PC-9 (cell line): ENCODE measurements at regions of chr1 and their contacts with region 1.

Region 1: GRCh38 chr1:172745014-172745413 is 86.1 kb downstream of the FASLG start:
- DNase-seq: peak; percentile 38 to 66
- H3K4me3 ChIP-seq: no peak overlapping the region
- H3K27ac ChIP-seq: no peak overlapping the region
- H3K4me1 ChIP-seq: peaks cover 22% of the 10 kb centered on the region
- H3K27me3 ChIP-seq: 0 out of 2 replicates have a peak, but pooled peaks cover 5% of the 10 kb centered on the region
- CTCF ChIP-seq: peak; percentile 86

Region 2: DNA sequence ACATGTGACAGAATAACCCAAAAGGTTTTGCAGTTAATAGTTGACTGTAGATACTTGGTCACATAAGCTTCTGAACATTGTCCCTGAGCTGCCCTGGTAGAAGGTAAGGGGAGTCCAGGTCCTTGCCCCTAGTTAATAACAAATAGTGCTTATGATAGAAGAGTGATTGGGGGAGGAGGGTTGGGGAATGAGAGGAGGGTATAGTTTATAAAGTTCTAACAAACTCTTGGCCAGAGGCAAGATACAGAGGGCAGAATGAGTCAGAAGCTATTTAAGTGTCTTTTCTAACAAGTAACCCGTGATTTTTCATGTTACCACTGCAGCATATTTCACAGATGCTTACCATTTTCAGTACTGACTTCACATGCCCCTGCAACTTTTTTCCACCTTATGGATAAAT is 1149.7 kb before region 1 on chr1:
- CTCF ChIA-PET with region 1: no interaction called
- POLR2A ChIA-PET with region 1: no interaction called
- intact Hi-C with region 1: no loop called
- DNase-seq: no peak
- H3K4me3 ChIP-seq: no peak overlapping the region
- H3K27ac ChIP-seq: no peak overlapping the region
- H3K4me1 ChIP-seq: no peaks in the 10 kb centered on the region
- H3K27me3 ChIP-seq: no peaks in the 10 kb centered on the region
- CTCF ChIP-seq: no peak

Region 3: DNA sequence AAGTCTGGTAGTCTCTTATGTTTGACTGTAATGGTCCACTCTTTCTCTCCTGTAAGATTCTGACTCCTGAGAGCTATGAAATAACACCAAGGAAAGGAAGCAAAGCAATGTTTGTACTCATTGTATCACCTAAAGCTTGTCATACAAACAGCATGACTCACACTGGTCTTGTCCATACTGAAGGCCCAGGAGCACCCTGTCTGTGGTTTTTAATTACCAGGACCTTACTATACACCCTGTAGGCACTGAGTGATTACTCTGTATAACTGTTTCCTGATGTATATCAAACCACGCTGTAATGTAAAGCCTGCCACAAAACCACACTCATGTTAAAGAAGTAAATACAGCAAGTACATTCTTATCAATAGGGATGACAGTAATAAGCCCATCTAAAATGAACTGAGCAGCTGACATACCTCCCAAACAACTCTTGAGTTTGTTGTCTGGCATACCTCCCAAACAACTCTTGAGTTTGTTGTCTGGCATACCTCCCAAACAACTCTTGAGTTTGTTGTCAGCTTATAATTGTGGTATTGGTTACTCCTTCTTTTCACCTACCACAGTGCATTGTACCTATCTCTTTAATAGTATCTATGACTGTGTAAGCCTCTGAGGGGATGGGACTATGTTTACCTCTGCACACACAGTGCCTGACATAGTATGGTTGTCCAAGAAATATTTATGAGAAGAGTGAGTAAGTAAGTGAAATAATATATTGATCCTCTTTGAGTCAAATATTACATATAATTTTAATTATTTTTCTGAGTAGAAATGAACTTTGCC is 317.3 kb after region 1 on chr1:
- CTCF ChIA-PET with region 1: no interaction called
- POLR2A ChIA-PET with region 1: interaction called, 4 read pairs
- intact Hi-C with region 1: loop called (anchors 5 kb)
- DNase-seq: peak; percentile 51 to 96
- H3K4me3 ChIP-seq: no peak overlapping the region
- H3K27ac ChIP-seq: peak overlapping the region; percentile 32; the same call in 1 of the 2 replicates
- H3K4me1 ChIP-seq: peaks cover 36% of the 10 kb centered on the region
- H3K27me3 ChIP-seq: no peaks in the 10 kb centered on the region
- CTCF ChIP-seq: no peak

Region 4: DNA sequence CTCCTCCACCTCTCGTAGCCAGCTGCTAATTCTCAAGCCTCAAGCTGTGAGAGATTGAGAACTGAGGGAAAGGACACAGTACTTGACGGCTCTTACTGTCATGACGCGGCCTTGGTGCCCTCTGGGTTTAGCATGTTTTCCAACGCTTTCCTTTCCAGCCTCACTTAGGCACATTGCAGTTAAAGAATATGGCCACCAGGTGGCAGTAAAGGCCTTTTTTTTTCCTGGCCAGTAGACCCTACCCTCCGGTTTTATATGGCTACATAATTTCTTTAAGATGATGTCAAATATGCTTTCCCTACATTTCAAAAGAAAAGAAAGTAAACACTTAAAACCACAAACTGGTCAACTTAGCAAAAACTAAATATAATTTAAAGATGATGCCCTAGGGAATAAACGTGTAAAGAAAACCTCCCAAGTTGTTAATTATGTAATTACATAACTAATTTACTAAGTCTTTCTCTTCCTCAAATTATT is 675.4 kb after region 1 on chr1:
- CTCF ChIA-PET with region 1: interaction called, 3 read pairs
- POLR2A ChIA-PET with region 1: no interaction called
- intact Hi-C with region 1: loop called (anchors 2 kb)
- DNase-seq: peak; percentile 61 to 68
- H3K4me3 ChIP-seq: no peak overlapping the region
- H3K27ac ChIP-seq: no peak overlapping the region
- H3K4me1 ChIP-seq: peaks cover 36% of the 10 kb centered on the region
- H3K27me3 ChIP-seq: no peaks in the 10 kb centered on the region
- CTCF ChIP-seq: peak; percentile 95

Region 5: DNA sequence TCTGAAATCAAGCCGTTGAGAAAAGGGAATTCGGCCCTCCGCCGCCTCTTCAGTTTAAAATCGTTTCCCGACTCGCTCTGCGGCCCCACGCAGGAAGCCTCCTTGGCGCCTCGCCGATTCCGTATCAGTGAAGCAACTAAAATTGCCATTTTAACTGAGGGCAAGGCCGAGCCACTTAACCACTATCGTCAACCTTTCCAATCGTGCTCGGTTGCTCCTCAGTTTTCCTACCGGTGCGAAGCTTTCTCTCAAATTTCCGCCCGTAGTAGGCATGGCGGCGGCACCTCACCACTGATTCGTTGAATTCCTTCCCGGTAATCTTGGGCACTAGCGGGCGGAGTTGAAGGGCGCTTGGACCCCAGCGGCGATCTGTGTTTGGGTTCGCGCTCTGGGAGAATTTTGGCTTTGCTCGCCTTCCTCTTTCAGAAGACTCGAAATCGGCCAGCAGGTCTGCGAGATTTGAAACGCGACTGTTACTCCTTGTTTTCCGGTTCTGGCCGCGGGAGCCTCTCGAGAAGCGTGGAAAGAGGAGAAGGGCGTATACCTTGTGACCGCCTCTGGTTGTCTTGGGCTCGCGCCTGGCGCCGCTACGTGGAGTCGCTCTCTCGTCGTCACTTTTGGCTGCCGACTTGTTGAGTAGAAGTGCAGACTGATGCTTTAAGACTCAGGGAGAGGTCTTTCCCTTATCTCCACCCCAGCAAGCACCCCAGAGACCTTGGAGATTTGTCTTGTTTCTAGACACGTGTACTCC is 1079.5 kb after region 1 on chr1 and contains the starts of genes CENPL and DARS2:
- CTCF ChIA-PET with region 1: no interaction called
- POLR2A ChIA-PET with region 1: no interaction called
- intact Hi-C with region 1: loop called (anchors 1 kb)
- DNase-seq: peak; percentile 86 to 90
- H3K4me3 ChIP-seq: peak within 1 kb of the TSS; percentile 84
- H3K27ac ChIP-seq: peak within 1 kb of the TSS; percentile 95
- H3K4me1 ChIP-seq: peaks cover 17% of the 10 kb centered on the region
- H3K27me3 ChIP-seq: no peaks in the 10 kb centered on the region
- CTCF ChIP-seq: no peak
- total RNA-seq, gene CENPL: 14.4 and 19.5 TPM in 2 replicates
- total RNA-seq, gene DARS2: 15.0 and 18.3 TPM in 2 replicates

Region 6: DNA sequence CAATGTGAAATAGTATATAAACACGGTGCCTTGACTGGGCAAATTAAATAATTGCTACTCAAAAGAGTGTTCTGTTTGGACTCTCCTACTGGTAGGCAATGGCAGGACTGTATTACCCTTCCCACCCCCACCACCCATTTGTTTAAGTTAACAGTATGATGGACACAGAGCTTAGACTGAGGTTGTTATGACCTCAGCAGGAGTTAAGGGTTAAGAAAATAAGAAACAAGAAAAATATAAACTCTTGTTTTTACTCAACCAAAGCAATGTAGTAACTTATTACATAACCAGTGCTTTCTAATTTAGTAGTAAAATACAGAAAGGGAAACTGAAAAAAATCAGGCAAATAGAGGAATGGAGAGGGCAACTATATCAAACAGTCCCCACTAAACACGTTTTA is 1192.0 kb after region 1 on chr1:
- CTCF ChIA-PET with region 1: no interaction called
- POLR2A ChIA-PET with region 1: no interaction called
- intact Hi-C with region 1: loop called (anchors 10 kb)
- DNase-seq: no peak
- H3K4me3 ChIP-seq: no peak overlapping the region
- H3K27ac ChIP-seq: no peak overlapping the region
- H3K4me1 ChIP-seq: no peaks in the 10 kb centered on the region
- H3K27me3 ChIP-seq: no peaks in the 10 kb centered on the region
- CTCF ChIP-seq: no peak

Region 7: GRCh38 chr1:174217787-174218574 is 1473.0 kb after region 1 on chr1:
- CTCF ChIA-PET with region 1: no interaction called
- POLR2A ChIA-PET with region 1: no interaction called
- intact Hi-C with region 1: loop called (anchors 5 kb)
- DNase-seq: no peak
- H3K4me3 ChIP-seq: no peak overlapping the region
- H3K27ac ChIP-seq: no peak overlapping the region
- H3K4me1 ChIP-seq: 0 out of 2 replicates have a peak, but pooled peaks cover 5% of the 10 kb centered on the region
- H3K27me3 ChIP-seq: no peaks in the 10 kb centered on the region
- CTCF ChIP-seq: peak; percentile 87